GM12878 (cell line): ENCODE measurements at regions of chr5 and their contacts with region 1.

Region 1: DNA sequence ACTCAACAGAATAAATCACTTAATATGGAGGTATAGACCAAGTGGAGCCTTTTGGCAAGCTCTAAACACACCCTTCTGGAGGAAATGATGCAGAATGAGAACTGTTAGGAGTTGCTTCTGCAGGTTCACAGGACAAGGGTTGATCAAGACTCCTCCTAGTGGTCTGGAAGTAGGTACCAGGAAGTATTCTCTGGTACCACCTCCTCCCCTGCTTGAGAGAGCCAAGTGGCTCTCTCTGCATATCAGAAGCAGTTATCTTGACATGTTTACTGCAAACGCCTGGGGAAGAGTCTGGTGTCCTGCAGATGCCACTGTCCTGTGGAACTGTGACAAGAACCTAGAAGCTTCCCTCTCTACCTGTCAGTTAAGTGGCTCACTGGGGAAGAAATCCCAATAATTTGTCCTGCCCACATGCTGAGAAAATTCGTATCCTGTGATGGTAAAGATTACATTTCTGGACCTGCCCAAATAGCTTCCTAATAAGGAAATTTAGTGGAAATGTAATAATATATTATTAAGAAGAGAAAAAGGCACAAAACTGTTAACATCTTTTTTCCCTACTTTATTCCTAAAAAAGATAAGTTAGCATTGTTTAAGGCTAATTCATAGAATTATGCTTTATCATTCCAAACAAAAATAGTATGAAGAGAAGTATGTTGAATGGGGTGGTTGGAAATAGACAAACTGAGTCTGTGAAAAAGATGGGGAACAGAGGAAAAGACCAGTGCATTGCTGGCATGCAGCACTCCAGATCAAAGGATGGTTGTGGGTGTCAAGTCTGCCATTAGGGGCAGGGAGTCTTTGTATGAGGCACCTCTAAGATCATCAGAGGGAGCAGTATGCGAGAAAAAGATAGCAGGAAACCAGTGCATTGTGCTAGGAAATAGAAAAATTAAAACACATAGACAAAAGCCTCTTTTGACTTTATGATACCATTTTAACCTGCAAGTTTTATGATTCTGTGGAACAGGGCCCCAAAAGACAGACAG is 118.8 kb downstream of the CDC42SE2 start:
- DNase-seq: peak; percentile 71
- ATAC-seq: peak; percentile 74
- H3K4me3 ChIP-seq: no peak overlapping the region
- H3K27ac ChIP-seq: peak overlapping the region; percentile 95
- H3K4me1 ChIP-seq: peaks cover 57% of the 10 kb centered on the region
- H3K27me3 ChIP-seq: no peaks in the 10 kb centered on the region
- CTCF ChIP-seq: peak; percentile 67 to 83 (median 69)
- EP300 ChIP-seq: 0 out of 4 replicates have a peak, but pooled peaks of 1 of the 2 experiments have one; percentile 2
- POLR2A ChIP-seq: no peak
- RAD21 ChIP-seq: peak; percentile 79

Region 2: GRCh38 chr5:130323804-130324454 is 1058.8 kb before region 1 on chr5:
- CTCF ChIA-PET with region 1: no interaction called
- POLR2A ChIA-PET with region 1: no interaction called
- RAD21 ChIA-PET with region 1: no interaction called
- SMC1A ChIA-PET with region 1: no interaction called
- in situ Hi-C with region 1: no loop called
- intact Hi-C with region 1: loop called (anchors 5 kb)
- DNase-seq: peak; percentile 72
- ATAC-seq: peak; percentile 98
- H3K4me3 ChIP-seq: no peak overlapping the region
- H3K27ac ChIP-seq: peak overlapping the region; percentile 70
- H3K4me1 ChIP-seq: peaks cover 14% of the 10 kb centered on the region
- H3K27me3 ChIP-seq: no peaks in the 10 kb centered on the region
- CTCF ChIP-seq: no peak
- EP300 ChIP-seq: peak; percentile 95 to 97
- POLR2A ChIP-seq: no peak
- RAD21 ChIP-seq: no peak

Region 3: GRCh38 chr5:131129306-131129705 is 253.4 kb before region 1 on chr5:
- CTCF ChIA-PET with region 1: no interaction called
- POLR2A ChIA-PET with region 1: no interaction called
- RAD21 ChIA-PET with region 1: no interaction called
- SMC1A ChIA-PET with region 1: no interaction called
- in situ Hi-C with region 1: no loop called
- intact Hi-C with region 1: no loop called
- DNase-seq: no peak
- ATAC-seq: no peak
- H3K4me3 ChIP-seq: no peak overlapping the region
- H3K27ac ChIP-seq: no peak overlapping the region
- H3K4me1 ChIP-seq: no peaks in the 10 kb centered on the region
- H3K27me3 ChIP-seq: no peaks in the 10 kb centered on the region
- CTCF ChIP-seq: no peak
- EP300 ChIP-seq: no peak
- POLR2A ChIP-seq: no peak
- RAD21 ChIP-seq: no peak

Region 4: GRCh38 chr5:131214609-131215227 is 168.0 kb before region 1 on chr5:
- CTCF ChIA-PET with region 1: interaction called, 19 read pairs
- POLR2A ChIA-PET with region 1: interaction called, 17 read pairs
- RAD21 ChIA-PET with region 1: interaction called, 66 read pairs
- SMC1A ChIA-PET with region 1: interaction called, 55 read pairs
- in situ Hi-C with region 1: loop called (anchors 5 kb)
- intact Hi-C with region 1: no loop called
- DNase-seq: no peak
- ATAC-seq: no peak
- H3K4me3 ChIP-seq: peak overlapping the region; percentile 50
- H3K27ac ChIP-seq: peak overlapping the region; percentile 94
- H3K4me1 ChIP-seq: peaks cover 10% of the 10 kb centered on the region; the same call in 1 of the 2 replicates
- H3K27me3 ChIP-seq: no peaks in the 10 kb centered on the region
- CTCF ChIP-seq: no peak
- EP300 ChIP-seq: no peak
- POLR2A ChIP-seq: no peak
- RAD21 ChIP-seq: no peak

Region 5: DNA sequence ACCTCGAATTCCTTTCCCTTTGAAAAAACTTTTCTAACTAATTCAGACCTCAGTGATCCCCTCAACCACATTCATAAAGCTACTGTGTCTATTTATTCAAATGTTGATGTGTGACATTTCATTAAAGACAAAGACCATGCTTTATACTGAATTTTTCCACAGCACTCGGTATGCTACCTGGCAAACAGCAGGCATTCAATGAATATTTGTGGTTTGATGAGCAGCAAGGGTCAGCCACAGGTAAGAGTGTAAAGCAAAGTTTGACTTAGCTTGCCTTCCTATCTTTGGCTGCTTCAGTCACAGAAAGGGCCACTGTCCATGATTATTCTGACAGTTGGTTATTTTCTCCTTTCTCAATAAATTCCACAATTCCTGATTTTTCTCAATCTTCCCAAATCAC is 124.0 kb before region 1 on chr5:
- CTCF ChIA-PET with region 1: interaction called, 53 read pairs
- POLR2A ChIA-PET with region 1: interaction called, 28 read pairs
- RAD21 ChIA-PET with region 1: interaction called, 145 read pairs
- SMC1A ChIA-PET with region 1: interaction called, 67 read pairs
- in situ Hi-C with region 1: no loop called
- intact Hi-C with region 1: no loop called
- DNase-seq: no peak
- ATAC-seq: no peak
- H3K4me3 ChIP-seq: no peak overlapping the region
- H3K27ac ChIP-seq: peak overlapping the region; percentile 35
- H3K4me1 ChIP-seq: peaks cover 24% of the 10 kb centered on the region
- H3K27me3 ChIP-seq: no peaks in the 10 kb centered on the region
- CTCF ChIP-seq: no peak
- EP300 ChIP-seq: no peak
- POLR2A ChIP-seq: no peak
- RAD21 ChIP-seq: no peak

Region 6: DNA sequence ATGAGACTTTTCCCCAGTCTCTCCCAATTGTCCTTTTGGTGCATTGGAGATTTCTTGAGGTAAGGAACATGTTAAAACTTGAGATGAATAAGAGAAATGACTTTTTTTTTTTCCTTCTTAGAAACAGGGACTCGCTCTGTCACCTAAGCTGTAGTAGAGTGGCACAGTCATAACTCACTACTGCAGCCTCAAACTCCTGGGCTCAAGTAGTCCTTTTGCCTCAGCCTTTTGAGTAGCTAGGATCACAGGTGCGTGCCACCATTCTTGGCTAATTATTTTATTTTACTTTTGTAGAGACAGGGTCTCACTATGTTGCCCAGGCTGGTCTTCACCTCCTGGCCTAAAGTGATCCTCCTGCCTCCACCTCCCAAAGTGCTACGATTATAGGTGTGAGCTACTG is 93.0 kb before region 1 on chr5:
- CTCF ChIA-PET with region 1: interaction called, 10 read pairs
- POLR2A ChIA-PET with region 1: interaction called, 4 read pairs
- RAD21 ChIA-PET with region 1: interaction called, 9 read pairs
- SMC1A ChIA-PET with region 1: interaction called, 17 read pairs
- in situ Hi-C with region 1: no loop called
- intact Hi-C with region 1: no loop called
- DNase-seq: no peak
- ATAC-seq: peak; percentile 60
- H3K4me3 ChIP-seq: peak overlapping the region; percentile 57; the same call in 1 of the 2 replicates
- H3K27ac ChIP-seq: peak overlapping the region; percentile 82
- H3K4me1 ChIP-seq: peaks cover 33% of the 10 kb centered on the region
- H3K27me3 ChIP-seq: no peaks in the 10 kb centered on the region
- CTCF ChIP-seq: no peak
- EP300 ChIP-seq: no peak
- POLR2A ChIP-seq: no peak
- RAD21 ChIP-seq: no peak

Region 7: GRCh38 chr5:131417240-131417869 is 34.7 kb after region 1 on chr5:
- CTCF ChIA-PET with region 1: interaction called, 11 read pairs
- POLR2A ChIA-PET with region 1: interaction called, 5 read pairs
- RAD21 ChIA-PET with region 1: interaction called, 13 read pairs
- SMC1A ChIA-PET with region 1: interaction called, 22 read pairs
- in situ Hi-C with region 1: no loop called
- intact Hi-C with region 1: loop called (anchors 2 kb)
- DNase-seq: peak; percentile 34
- ATAC-seq: peak; percentile 65
- H3K4me3 ChIP-seq: no peak overlapping the region
- H3K27ac ChIP-seq: no peak overlapping the region
- H3K4me1 ChIP-seq: peaks cover 18% of the 10 kb centered on the region
- H3K27me3 ChIP-seq: no peaks in the 10 kb centered on the region
- CTCF ChIP-seq: peak; percentile 65 to 77 (median 75)
- EP300 ChIP-seq: no peak
- POLR2A ChIP-seq: no peak
- RAD21 ChIP-seq: peak; percentile 82

Region 8: GRCh38 chr5:131430794-131431193 is 48.1 kb after region 1 on chr5:
- CTCF ChIA-PET with region 1: no interaction called
- POLR2A ChIA-PET with region 1: no interaction called
- RAD21 ChIA-PET with region 1: no interaction called
- SMC1A ChIA-PET with region 1: no interaction called
- in situ Hi-C with region 1: no loop called
- intact Hi-C with region 1: no loop called
- DNase-seq: no peak
- ATAC-seq: no peak
- H3K4me3 ChIP-seq: no peak overlapping the region
- H3K27ac ChIP-seq: no peak overlapping the region
- H3K4me1 ChIP-seq: no peaks in the 10 kb centered on the region
- H3K27me3 ChIP-seq: no peaks in the 10 kb centered on the region
- CTCF ChIP-seq: no peak
- EP300 ChIP-seq: no peak
- POLR2A ChIP-seq: no peak
- RAD21 ChIP-seq: no peak

Region 9: DNA sequence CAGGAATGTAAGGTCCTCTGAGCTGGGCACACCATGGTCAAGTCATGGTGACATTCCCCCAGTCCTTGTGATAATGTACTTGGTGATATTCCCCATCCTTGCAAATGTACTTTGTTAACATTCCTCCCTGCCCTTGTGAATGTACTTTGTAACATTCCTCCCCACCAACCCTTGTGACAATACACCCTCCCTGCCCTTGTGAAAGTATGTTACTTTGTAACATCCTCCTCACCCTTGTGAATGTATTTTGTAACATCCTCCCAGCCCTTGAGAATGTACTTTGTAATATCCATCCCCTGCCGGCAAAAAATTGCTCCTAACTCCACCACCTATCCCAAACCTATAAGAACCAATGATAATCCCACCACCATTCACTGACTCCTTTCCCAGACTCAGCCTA is 199.0 kb after region 1 on chr5:
- CTCF ChIA-PET with region 1: no interaction called
- POLR2A ChIA-PET with region 1: no interaction called
- RAD21 ChIA-PET with region 1: no interaction called
- SMC1A ChIA-PET with region 1: no interaction called
- in situ Hi-C with region 1: no loop called
- intact Hi-C with region 1: no loop called
- DNase-seq: no peak
- ATAC-seq: no peak
- H3K4me3 ChIP-seq: no peak overlapping the region
- H3K27ac ChIP-seq: no peak overlapping the region
- H3K4me1 ChIP-seq: no peaks in the 10 kb centered on the region
- H3K27me3 ChIP-seq: no peaks in the 10 kb centered on the region
- CTCF ChIP-seq: no peak
- EP300 ChIP-seq: no peak
- POLR2A ChIP-seq: no peak
- RAD21 ChIP-seq: no peak